ENCODE measurements at regions of chr4 and their contacts with region 1.

Region 1: GRCh38 chr4:88177961-88178625 is 19.7 kb upstream of the ABCG2 start:
- DNase-seq: peak; percentile 49
- H3K4me3 ChIP-seq: no peak overlapping the region
- H3K27ac ChIP-seq: no peak overlapping the region
- H3K27me3 ChIP-seq: no peaks in the 10 kb centered on the region
- CTCF ChIP-seq: no peak

Region 2: DNA sequence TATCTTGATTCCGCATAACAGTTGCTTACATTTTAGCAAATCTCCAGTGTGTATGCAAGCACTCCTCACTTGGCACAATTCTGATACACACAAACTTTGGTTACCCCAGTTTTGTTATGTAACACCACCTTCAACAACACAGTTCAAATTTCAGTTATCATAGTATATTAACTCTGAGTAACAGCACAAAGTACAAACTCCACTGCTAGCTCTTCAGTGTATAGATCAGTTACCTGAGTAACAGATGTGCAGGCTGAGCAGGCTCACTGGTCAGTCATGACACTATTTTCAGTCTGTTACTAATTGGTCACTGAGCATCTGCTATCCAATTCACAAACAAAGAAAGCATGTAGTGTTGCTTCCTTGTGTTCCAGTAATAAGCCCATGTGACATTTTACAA is 115.2 kb before region 1 on chr4:
- CTCF ChIA-PET with region 1: no interaction called
- POLR2A ChIA-PET with region 1: no interaction called
- DNase-seq: no peak
- H3K4me3 ChIP-seq: no peak overlapping the region
- H3K27ac ChIP-seq: no peak overlapping the region
- H3K27me3 ChIP-seq: no peaks in the 10 kb centered on the region
- CTCF ChIP-seq: no peak

Region 3: DNA sequence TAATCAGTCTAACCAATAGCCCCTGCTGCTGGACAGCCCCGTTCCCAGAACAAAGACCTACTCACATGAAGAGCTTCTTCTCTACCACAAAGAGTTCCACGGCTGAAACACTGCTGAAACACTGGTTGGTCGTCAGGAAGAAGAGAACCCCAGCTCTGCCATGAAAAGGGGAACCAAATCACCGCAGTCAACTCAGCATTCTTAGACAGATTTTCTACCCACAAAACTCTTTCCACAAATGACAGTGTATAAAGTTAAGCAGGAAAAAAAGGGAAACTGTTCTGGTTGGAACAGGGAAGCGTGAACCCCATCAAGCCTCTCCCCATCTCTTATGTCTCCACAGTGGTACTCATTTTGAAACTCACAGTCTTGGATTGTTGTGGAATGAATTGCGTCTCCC is 76.9 kb before region 1 on chr4:
- CTCF ChIA-PET with region 1: interaction called, 10 read pairs
- POLR2A ChIA-PET with region 1: no interaction called
- DNase-seq: no peak
- H3K4me3 ChIP-seq: no peak overlapping the region
- H3K27ac ChIP-seq: no peak overlapping the region
- H3K27me3 ChIP-seq: no peaks in the 10 kb centered on the region
- CTCF ChIP-seq: no peak

Region 4: GRCh38 chr4:88188738-88189417 is 10.8 kb after region 1 on chr4:
- CTCF ChIA-PET with region 1: no interaction called
- POLR2A ChIA-PET with region 1: no interaction called
- DNase-seq: no peak
- H3K4me3 ChIP-seq: no peak overlapping the region
- H3K27ac ChIP-seq: no peak overlapping the region
- H3K27me3 ChIP-seq: no peaks in the 10 kb centered on the region
- CTCF ChIP-seq: no peak

Measured in AG04450 (cell line).